CD4-positive, alpha-beta memory T cell (primary cell): ENCODE measurements at regions of chr10 and their contacts with region 1.

Region 1: GRCh38 chr10:47207281-47207615 is 92.7 kb upstream of the GDF10 start:
- DNase-seq: peak in 2 of 5 donors; percentile 7 to 28
- H3K4me3 ChIP-seq: peak overlapping the region in 1 of 2 donors; percentile 36
- H3K4me3 Mint-ChIP-seq: peak overlapping the region; percentile 61 to 82 (median 78)
- H3K27ac ChIP-seq: peak overlapping the region; percentile 22
- H3K27ac Mint-ChIP-seq: peak overlapping the region; percentile 77 to 94 (median 91)
- H3K4me1 ChIP-seq: peaks cover 60% of the 10 kb centered on the region
- H3K4me1 Mint-ChIP-seq: peaks cover 39 to 72% (median 64%) of the 10 kb centered on the region in 4 donors
- H3K27me3 ChIP-seq: no peaks in the 10 kb centered on the region
- H3K27me3 Mint-ChIP-seq: no peaks in the 10 kb centered on the region

Region 2: DNA sequence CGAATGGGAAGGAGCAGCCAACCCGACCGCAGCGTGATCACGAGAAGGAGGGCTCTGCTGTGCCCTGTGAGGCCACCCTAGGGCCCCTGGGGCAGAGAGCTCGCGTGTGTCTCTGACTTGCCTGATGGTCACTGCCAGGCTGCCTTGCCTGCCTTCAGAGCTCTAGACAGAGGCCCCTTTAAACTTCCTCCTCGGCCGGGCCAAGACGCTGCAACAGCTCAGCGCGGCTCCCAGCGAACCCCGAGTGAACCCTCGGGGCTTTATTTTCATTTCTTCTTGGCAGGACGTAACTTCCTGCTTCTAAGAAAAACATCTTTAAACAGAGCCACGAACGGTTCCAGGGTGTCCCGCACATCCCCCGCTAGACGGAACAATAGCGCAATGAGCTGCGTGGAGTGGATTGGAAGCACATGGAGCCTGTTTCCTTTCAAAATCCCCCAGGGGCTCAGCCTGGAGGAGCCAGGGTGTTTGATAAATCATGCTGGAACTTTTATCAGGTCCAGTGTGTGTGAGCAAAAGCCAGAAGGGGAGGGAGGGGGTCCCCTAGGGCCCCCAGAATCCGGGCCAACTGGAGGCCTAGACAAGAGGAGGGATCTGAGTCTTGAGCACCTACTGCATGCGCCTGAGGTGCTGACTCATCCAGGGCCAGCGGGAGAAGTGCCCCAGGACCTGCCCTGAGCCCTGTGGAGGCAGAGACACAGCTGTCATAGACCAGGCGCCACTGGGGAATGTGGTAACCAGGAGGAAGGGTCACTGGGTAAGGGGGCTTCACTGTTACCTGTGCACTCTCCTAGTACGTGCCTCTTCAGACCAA is 41.3 kb before region 1 on chr10:
- CTCF ChIA-PET with region 1: interaction called, 7 read pairs
- POLR2A ChIA-PET with region 1: interaction called, 16 read pairs
- intact Hi-C with region 1: loop called (anchors 5 kb)
- DNase-seq: peak; percentile 44 to 61 (median 51)
- H3K4me3 ChIP-seq: peak overlapping the region; percentile 32 to 64
- H3K4me3 Mint-ChIP-seq: peak overlapping the region; percentile 86 to 94 (median 88)
- H3K27ac ChIP-seq: peak overlapping the region; percentile 40
- H3K27ac Mint-ChIP-seq: peak overlapping the region; percentile 84 to 96 (median 95)
- H3K4me1 ChIP-seq: peaks cover 22% of the 10 kb centered on the region
- H3K4me1 Mint-ChIP-seq: peaks cover 12 to 23% (median 18%) of the 10 kb centered on the region in 4 donors
- H3K27me3 ChIP-seq: no peaks in the 10 kb centered on the region
- H3K27me3 Mint-ChIP-seq: no peaks in the 10 kb centered on the region